ENCODE measurements at regions of chr2 and their contacts with region 1.

Region 1: GRCh38 chr2:191533693-191534180 is 144.2 kb upstream of the NABP1 start:
- DNase-seq: no peak
- ATAC-seq: no peak
- H3K4me3 ChIP-seq: no peak overlapping the region
- H3K27ac ChIP-seq: no peak overlapping the region
- H3K4me1 ChIP-seq: no peaks in the 10 kb centered on the region
- CTCF ChIP-seq: no peak
- EP300 ChIP-seq: no peak
- POLR2A ChIP-seq: no peak
- RAD21 ChIP-seq: no peak

Region 2: DNA sequence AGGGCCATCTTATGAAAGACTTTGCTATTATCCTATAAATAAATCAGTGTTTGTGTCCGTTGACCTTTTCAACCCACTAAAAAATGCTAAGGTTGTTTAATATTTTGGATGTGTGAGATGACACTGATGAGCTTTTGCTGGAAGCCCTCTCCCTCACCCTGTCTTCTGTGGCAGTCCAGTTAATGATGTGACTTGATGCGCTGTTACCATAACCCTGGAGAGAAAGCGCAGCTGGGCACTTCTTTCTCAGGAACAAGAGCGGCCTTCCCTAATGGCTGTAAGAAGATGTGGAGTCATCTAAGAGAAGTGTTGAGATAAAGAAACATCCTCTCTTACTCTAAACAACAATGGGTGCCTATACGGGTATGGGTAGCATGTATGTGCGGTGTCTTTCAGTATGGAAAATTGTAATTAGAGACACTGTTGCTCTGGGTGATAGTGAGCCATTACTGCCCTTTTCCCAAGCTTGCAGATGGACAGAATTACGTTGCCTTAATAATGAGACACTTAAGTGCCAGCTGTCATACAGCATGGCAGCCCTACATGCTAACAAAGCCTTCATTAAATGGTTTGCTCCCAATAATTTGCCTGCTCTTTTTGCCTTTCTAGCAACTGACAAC is 21.4 kb before region 1 on chr2:
- CTCF ChIA-PET with region 1: interaction called, 3 read pairs
- POLR2A ChIA-PET with region 1: interaction called, 10 read pairs
- DNase-seq: no peak
- ATAC-seq: no peak
- H3K4me3 ChIP-seq: no peak overlapping the region
- H3K27ac ChIP-seq: peak overlapping the region; percentile 12 to 50; a peak in 4 of 6 replicates
- H3K4me1 ChIP-seq: peaks cover 47% of the 10 kb centered on the region
- CTCF ChIP-seq: no peak
- EP300 ChIP-seq: no peak
- POLR2A ChIP-seq: no peak
- RAD21 ChIP-seq: no peak

Region 3: GRCh38 chr2:191773136-191773535 is 239.4 kb after region 1 on chr2:
- CTCF ChIA-PET with region 1: no interaction called
- POLR2A ChIA-PET with region 1: no interaction called
- DNase-seq: no peak
- ATAC-seq: no peak
- H3K4me3 ChIP-seq: no peak overlapping the region
- H3K27ac ChIP-seq: no peak overlapping the region
- H3K4me1 ChIP-seq: no peaks in the 10 kb centered on the region
- CTCF ChIP-seq: no peak
- EP300 ChIP-seq: no peak
- POLR2A ChIP-seq: no peak
- RAD21 ChIP-seq: no peak